Naive thymus-derived CD4-positive, alpha-beta T cell (primary cell): ENCODE measurements at regions of chr11 and their contacts with region 1.

Region 1: GRCh38 chr11:130069684-130070108 is at the start of gene APLP2:
- DNase-seq: peak; percentile 93 to 98 (median 95)
- ATAC-seq: peak; percentile 96
- H3K4me3 ChIP-seq: peak within 1 kb of the TSS; percentile 87
- H3K4me3 Mint-ChIP-seq: peak within 1 kb of the TSS; percentile 94 to 99 (median 96)
- H3K27ac ChIP-seq: peak within 1 kb of the TSS; percentile 89
- H3K27ac Mint-ChIP-seq: peak within 1 kb of the TSS; percentile 92 to 97 (median 95)
- H3K4me1 ChIP-seq: peaks cover 3 to 5% of the 10 kb centered on the region in 2 donors
- H3K4me1 Mint-ChIP-seq: peaks cover 19 to 33% (median 21%) of the 10 kb centered on the region in 7 donors
- H3K27me3 ChIP-seq: peaks cover 0 to 3% of the 10 kb centered on the region in 2 donors
- H3K27me3 Mint-ChIP-seq: peaks cover 0 to 29% (median 0%) of the 10 kb centered on the region in 5 donors
- total RNA-seq, gene APLP2: 26.6 to 172 (median 51.5) TPM

Region 2: DNA sequence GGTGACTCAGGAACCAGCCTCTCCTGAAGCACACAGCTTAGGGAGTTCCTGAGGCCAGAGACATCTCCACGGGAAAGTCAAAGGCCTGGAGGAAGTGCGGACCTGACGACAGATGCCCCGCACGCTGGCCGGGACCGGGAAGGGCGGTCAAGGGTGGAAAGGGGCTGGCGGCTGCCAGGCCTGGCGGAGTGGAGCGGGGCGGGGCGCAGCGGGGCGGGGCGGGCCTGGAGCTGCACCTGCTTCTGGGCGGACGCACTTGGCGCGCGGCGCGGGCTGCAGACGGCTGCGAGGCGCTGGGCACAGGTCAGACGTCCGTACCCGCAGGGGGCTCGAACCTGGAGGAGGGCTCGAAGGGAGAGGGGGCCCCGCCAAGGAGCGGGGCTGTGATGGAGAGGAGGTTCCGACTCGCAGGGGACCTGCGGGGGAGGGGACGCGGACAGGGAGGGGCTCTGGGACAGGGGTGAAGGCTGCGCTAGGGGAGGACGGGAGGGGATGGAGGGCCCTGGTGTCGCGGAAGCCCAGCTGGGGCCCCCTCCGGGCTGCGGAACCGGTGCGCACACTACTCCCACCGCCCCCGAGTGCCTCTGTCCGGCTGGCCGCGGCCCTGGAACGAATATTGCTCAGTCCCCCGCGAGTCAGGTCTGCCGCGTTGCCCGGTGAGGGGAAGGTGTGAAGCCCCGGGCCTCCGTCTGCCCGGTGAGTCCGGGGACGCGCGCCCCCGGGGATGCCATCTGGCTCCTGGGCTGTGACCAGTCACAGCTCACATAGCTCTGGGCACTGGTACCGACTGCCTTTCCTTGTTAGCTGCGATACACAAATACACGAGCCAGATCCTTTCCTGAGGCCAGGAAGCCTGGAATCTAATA is 253.9 kb before region 1 on chr11 and contains the start of gene TMEM45B:
- CTCF ChIA-PET with region 1: no interaction called
- POLR2A ChIA-PET with region 1: no interaction called
- intact Hi-C with region 1: loop called in 1 of 2 experiments (anchors 2 kb)
- DNase-seq: peak; percentile 27 to 57 (median 45)
- ATAC-seq: peak; percentile 38
- H3K4me3 ChIP-seq: peak within 1 kb of the TSS; percentile 54
- H3K4me3 Mint-ChIP-seq: peak within 1 kb of the TSS; percentile 83 to 91 (median 88)
- H3K27ac ChIP-seq: peak within 1 kb of the TSS; percentile 31
- H3K27ac Mint-ChIP-seq: peak within 1 kb of the TSS; percentile 84 to 99 (median 95)
- H3K4me1 ChIP-seq: peaks cover 5 to 9% of the 10 kb centered on the region in 2 donors
- H3K4me1 Mint-ChIP-seq: peaks cover 29 to 79% (median 61%) of the 10 kb centered on the region in 7 donors
- H3K27me3 ChIP-seq: no peaks in the 10 kb centered on the region
- H3K27me3 Mint-ChIP-seq: peaks cover 0 to 75% (median 17%) of the 10 kb centered on the region in 5 donors
- total RNA-seq, gene TMEM45B: 2.3 to 40.8 (median 3.6) TPM

Region 3: GRCh38 chr11:129895126-129896041 is 174.3 kb before region 1 on chr11 and contains the start of gene NFRKB:
- CTCF ChIA-PET with region 1: no interaction called
- POLR2A ChIA-PET with region 1: interaction called, 3 read pairs
- intact Hi-C with region 1: loop called (anchors 1 to 2 kb)
- DNase-seq: peak; percentile 75 to 95 (median 88)
- ATAC-seq: peak; percentile 99
- H3K4me3 ChIP-seq: peak within 1 kb of the TSS; percentile 76
- H3K4me3 Mint-ChIP-seq: peak within 1 kb of the TSS; percentile 86 to 96 (median 92)
- H3K27ac ChIP-seq: peak within 1 kb of the TSS; percentile 84
- H3K27ac Mint-ChIP-seq: peak within 1 kb of the TSS; percentile 82 to 95 (median 90)
- H3K4me1 ChIP-seq: peaks cover 9 to 18% of the 10 kb centered on the region in 2 donors
- H3K4me1 Mint-ChIP-seq: peaks cover 23 to 58% (median 44%) of the 10 kb centered on the region in 7 donors
- H3K27me3 ChIP-seq: no peaks in the 10 kb centered on the region
- H3K27me3 Mint-ChIP-seq: no peaks in the 10 kb centered on the region
- total RNA-seq, gene NFRKB: 40.4 to 81.3 (median 56.2) TPM

Region 4: DNA sequence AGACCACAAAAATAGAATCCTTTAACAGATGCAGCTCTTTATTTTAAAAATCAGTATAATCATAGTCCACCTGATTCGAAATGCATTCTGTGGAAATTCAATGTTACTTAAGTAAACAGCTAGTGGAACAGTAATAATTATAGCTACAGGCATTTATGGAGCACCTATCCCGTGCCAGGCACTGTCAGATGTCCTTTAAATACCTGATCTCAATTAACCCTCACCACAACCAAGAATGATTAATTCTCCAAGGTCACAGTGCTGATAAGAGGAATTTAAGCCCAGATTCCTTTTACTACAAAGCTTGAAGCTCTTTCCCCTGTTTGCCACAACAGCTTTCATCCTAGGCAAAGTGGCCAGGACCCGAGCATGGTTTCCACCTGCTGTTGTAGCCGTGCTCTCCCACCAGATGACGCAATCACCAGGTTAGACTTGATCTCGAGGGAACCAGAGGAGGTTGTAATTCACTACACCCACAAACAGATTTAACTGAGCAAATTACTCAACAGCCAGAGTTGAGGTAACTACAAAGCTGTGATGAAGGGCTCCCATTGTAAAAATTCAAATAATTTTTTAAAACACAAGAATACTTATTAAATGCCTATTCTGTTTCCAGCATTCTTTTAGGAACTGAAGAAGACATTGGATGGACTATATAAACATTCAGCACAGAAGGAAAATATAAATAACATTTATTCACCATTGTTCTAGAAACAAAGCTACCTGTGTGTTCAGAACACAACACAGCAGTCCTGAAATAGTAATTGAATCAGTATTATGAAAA is 77.3 kb before region 1 on chr11:
- CTCF ChIA-PET with region 1: interaction called, 3 read pairs
- POLR2A ChIA-PET with region 1: interaction called, 5 read pairs
- intact Hi-C with region 1: loop called in 1 of 2 experiments (anchors 2 kb)
- DNase-seq: peak in 7 of 9 donors; percentile 9 to 55 (median 33)
- ATAC-seq: peak; percentile 73
- H3K4me3 ChIP-seq: no peak overlapping the region
- H3K4me3 Mint-ChIP-seq: no peak overlapping the region
- H3K27ac ChIP-seq: no peak overlapping the region
- H3K27ac Mint-ChIP-seq: peak overlapping the region in 3 of 9 donors; percentile 32 to 66 (median 36)
- H3K4me1 ChIP-seq: no peaks in the 10 kb centered on the region
- H3K4me1 Mint-ChIP-seq: peaks cover 5 to 26% (median 19%) of the 10 kb centered on the region in 7 donors
- H3K27me3 ChIP-seq: no peaks in the 10 kb centered on the region
- H3K27me3 Mint-ChIP-seq: no peaks in the 10 kb centered on the region

Region 5: DNA sequence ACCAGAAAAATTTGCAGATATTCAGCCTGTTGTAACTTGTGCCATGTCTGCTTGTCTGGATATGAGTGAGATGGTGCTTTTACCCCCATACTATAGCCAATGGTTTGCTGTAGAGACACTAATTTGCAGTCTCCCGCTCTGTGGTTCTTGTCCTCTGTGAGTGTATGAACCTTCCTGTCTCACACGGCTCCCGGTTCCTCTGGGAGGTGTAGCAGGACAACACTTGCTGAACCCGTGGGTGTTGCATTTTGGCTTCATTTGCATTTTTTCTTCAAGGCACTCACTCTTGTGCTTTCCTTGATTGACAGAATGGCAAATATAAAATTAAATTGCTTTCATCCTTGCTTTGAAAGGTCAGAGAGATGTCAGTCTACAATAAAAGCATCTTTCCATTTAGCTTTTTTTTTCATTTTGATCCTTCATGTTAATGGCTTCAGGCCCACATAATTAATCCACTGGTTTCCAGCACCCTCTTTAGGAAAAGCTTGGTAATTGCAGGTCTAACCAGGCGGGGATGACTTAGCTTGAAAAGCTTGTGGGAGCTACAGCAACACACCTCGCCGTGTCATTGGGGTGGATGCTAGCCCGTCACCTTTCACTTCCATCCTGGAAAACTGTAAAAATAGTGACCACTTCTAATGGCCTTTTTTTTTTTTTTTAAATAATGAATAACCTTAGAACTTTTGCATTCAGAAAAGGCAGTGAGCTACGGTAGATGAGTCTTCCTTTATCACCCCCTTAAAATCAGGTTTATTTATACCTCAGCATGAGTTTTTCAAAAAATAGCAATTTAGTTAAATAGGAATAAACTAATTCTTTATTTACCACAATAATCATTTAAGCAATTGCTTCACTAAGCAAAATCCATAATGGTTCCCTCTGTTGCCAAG is 62.5 kb after region 1 on chr11:
- CTCF ChIA-PET with region 1: interaction called, 8 read pairs
- POLR2A ChIA-PET with region 1: no interaction called
- intact Hi-C with region 1: loop called in 1 of 2 experiments (anchors 1 kb)
- DNase-seq: peak in 8 of 9 donors; percentile 38 to 76 (median 68)
- ATAC-seq: peak; percentile 91
- H3K4me3 ChIP-seq: no peak overlapping the region
- H3K4me3 Mint-ChIP-seq: no peak overlapping the region
- H3K27ac ChIP-seq: no peak overlapping the region
- H3K27ac Mint-ChIP-seq: peak overlapping the region in 1 of 9 donors; percentile 6
- H3K4me1 ChIP-seq: no peaks in the 10 kb centered on the region
- H3K4me1 Mint-ChIP-seq: no peaks in the 10 kb centered on the region
- H3K27me3 ChIP-seq: no peaks in the 10 kb centered on the region
- H3K27me3 Mint-ChIP-seq: no peaks in the 10 kb centered on the region